Lower leg skin (tissue), 4 donors: ENCODE measurements at regions of chr2 and their contacts with region 1.

Region 1: DNA sequence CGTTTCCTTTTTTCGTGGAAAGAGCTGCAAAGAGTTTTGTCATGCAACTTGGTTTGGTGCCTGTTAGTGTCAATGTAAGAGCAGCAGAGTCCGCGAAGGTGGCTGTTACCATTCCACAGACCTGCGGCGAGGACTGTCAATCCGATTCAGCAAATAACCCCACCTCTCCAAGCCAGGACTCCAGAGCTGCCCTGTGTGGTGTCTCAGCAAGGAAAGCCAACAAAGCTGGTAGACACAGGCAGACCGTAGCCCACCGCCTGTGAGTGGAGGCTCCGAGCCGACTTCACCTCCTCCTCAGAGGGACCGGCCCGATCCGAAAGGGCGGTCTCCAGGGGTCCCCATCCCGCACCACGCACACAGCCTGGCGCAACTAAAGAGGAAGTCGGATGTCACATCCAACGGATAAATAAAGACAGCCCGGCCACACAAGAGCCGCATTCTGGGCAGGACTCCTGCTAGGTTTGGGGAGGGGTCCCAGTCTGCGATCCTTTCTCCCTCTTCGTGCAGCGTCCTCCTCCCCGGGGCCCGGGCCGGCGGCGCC is 819 bp downstream of the ANKRD44 start:
- DNase-seq: peak; percentile 19 to 89
- H3K4me3 ChIP-seq: peak overlapping the region; percentile 31
- CTCF ChIP-seq: no peak
- POLR2A ChIP-seq: no peak

Region 2: GRCh38 chr2:196660244-196660643 is 649.5 kb before region 1 on chr2:
- intact Hi-C with region 1: no loop called
- DNase-seq: no peak
- H3K4me3 ChIP-seq: no peak overlapping the region
- CTCF ChIP-seq: no peak
- POLR2A ChIP-seq: no peak

Region 3: DNA sequence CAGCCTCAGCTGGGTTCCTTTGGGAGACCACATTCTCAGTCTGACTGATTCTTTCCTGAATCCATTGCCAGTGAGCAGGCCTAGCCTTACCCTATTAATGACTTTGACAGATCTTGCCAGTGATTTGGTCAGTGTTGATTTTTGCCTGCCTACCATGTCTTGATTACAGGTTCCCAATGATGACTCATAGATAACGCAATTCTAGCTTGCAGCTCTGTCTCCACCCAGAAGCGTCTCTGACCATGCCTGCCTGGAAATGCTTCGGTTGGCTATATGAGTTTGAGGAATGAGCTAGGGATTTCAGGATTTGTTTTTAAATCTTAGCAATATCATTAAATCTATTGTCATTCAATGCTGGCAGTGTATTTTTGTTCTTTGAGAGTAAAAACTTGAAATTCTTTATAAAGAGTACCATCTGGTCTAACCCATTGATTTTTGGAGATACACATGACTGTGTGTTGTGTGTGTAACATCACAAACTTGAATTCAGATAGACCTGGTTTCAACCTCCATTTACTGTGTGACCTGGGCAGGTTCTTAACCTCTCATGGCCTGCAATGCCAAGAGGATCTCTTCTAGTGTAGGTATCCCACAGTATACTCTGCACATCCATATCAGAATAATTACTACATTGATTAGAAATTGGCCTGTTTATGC is 613.2 kb before region 1 on chr2:
- intact Hi-C with region 1: no loop called
- DNase-seq: peak in 1 of 2 donors; percentile 20
- H3K4me3 ChIP-seq: no peak overlapping the region
- CTCF ChIP-seq: no peak
- POLR2A ChIP-seq: no peak

Region 4: GRCh38 chr2:197209742-197210408 is 99.9 kb before region 1 on chr2:
- intact Hi-C with region 1: loop called (anchors 10 kb)
- DNase-seq: no peak
- H3K4me3 ChIP-seq: no peak overlapping the region
- CTCF ChIP-seq: no peak
- POLR2A ChIP-seq: no peak